ENCODE measurements at regions of chr20 and their contacts with region 1.

Region 1: GRCh38 chr20:45842169-45842812 is 8.7 kb downstream of the SNX21 start:
- DNase-seq: no peak
- ATAC-seq: peak; percentile 19 to 60 (median 42)
- H3K4me3 ChIP-seq: no peak overlapping the region
- H3K27ac ChIP-seq: peak overlapping the region; percentile 67
- H3K4me1 ChIP-seq: peaks cover 36% of the 10 kb centered on the region
- H3K27me3 ChIP-seq: no peaks in the 10 kb centered on the region
- CTCF ChIP-seq: no peak

Region 2: DNA sequence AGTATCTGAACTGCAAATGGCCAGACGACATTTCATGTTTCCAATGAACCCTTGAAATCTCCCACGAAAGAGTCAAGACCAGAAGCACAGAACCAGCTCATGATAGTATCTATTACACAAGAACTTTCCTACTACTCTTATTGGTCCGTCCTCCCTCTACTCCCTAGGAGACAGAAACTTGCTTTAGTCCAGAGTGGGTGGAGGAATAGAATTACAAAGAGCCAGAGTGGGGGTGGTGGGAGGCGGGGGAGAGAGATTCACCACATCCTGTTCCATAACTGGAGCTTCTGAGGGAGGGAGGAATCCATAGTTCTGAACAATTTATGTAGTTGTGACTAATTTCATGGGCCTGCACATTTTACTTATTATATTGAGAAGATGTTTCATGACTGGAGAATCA is 231.2 kb before region 1 on chr20:
- intact Hi-C with region 1: no loop called
- DNase-seq: no peak
- ATAC-seq: no peak
- H3K4me3 ChIP-seq: no peak overlapping the region
- H3K27ac ChIP-seq: no peak overlapping the region
- H3K4me1 ChIP-seq: no peaks in the 10 kb centered on the region
- H3K27me3 ChIP-seq: peaks cover 0 to 2% (median 0%) of the 10 kb centered on the region in 3 donors
- CTCF ChIP-seq: no peak

Region 3: DNA sequence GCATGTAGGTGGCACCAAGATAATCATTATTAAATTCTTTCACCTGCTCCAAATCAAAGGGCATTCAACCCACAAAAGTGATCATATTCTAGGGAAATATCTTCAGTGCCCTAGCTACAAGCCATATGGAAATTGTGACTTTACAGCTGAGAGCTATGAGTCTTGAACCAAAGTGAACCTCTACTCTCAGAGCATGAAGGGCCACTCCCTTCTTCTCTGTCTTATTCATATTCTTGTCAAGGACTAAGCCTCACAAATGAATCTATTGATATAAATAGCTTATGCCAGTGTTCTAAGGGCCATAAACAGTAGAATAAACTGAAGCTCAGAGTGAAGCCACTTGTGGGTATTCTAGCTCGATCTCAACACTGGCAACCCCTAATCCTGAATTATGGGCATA is 90.6 kb before region 1 on chr20:
- intact Hi-C with region 1: no loop called
- DNase-seq: no peak
- ATAC-seq: no peak
- H3K4me3 ChIP-seq: no peak overlapping the region
- H3K27ac ChIP-seq: no peak overlapping the region
- H3K4me1 ChIP-seq: no peaks in the 10 kb centered on the region
- H3K27me3 ChIP-seq: peaks cover 0 to 4% (median 0%) of the 10 kb centered on the region in 3 donors
- CTCF ChIP-seq: no peak

Region 4: DNA sequence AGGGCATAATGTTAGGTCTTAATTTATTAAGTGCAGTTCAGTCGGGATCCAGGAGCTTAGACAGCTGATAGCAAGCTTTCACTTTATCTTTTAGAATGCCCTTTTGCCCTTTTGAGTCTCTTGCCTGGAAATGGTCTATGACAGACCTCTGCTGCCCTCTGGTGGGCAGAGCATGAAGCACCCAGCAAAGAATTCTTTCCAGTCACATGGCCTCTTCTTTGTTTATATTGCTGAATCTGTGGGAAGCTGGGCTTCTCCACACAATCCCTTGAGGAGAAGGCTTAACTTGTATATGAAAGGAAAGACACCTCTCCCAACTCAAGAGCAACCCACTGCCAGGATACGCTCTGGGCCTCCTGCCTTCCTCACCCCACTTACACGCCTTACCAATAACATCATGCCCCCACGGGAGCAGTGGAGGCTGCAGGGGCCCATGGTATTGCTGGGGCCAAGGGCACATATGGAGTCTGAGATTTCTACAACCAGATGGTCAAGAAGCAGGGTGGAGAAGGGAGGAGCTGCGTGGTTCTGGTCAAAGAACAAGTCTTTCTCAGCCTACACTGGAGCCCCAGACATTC is 71.0 kb before region 1 on chr20:
- intact Hi-C with region 1: no loop called
- DNase-seq: peak; percentile 76 to 86
- ATAC-seq: peak; percentile 79 to 94 (median 83)
- H3K4me3 ChIP-seq: no peak overlapping the region
- H3K27ac ChIP-seq: no peak overlapping the region
- H3K4me1 ChIP-seq: no peaks in the 10 kb centered on the region
- H3K27me3 ChIP-seq: no peaks in the 10 kb centered on the region
- CTCF ChIP-seq: peak; percentile 97

Region 5: GRCh38 chr20:45880988-45881788 is 38.9 kb after region 1 on chr20 and contains the start of gene ZSWIM1:
- intact Hi-C with region 1: loop called in 1 of 2 experiments (anchors 5 kb)
- DNase-seq: peak; percentile 99
- ATAC-seq: peak; percentile 97 to 99 (median 98)
- H3K4me3 ChIP-seq: peak within 1 kb of the TSS; percentile 64
- H3K27ac ChIP-seq: peak within 1 kb of the TSS; percentile 72
- H3K4me1 ChIP-seq: peaks cover 18% of the 10 kb centered on the region
- H3K27me3 ChIP-seq: no peaks in the 10 kb centered on the region
- CTCF ChIP-seq: no peak
- total RNA-seq, gene ZSWIM1: 6.1 to 10.0 (median 7.7) TPM

Region 6: DNA sequence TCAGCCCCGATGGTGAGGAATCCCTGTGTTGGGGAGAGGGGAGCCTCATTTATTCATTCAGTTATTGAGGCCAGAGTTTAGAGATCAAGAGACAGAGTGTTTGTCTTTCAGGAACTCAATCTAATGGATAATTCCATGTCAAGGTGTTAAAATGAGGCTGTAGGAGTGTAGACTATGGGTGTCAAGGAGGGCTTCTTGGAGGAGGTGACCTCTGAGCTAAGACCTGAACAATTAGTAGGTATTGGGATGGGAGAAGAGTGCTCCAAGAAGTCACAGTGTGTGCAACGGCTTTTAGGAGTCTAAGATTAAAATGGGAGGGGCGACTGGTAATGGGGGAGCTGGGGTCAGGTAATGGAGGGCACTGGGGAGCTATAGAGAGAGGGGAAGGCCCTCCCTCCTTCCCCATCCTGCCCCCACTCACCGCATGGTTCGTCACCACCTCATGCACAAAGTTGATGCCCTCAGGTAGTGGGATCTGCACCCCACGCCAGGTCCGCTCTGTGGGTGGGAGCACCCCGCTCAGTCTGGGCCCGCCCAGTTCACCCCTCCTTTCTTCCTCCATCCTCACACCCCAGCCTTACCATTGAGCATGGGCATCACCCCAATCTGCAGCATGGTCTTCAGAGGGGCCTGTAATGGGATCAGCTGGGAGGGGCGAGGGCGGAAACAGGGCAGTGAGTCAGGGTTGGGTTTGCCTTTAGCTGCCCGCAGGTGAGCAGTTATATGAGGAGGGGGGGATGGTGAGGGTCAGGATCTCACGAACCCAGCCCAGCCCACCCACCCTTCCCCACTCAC is 56.9 kb after region 1 on chr20:
- intact Hi-C with region 1: no loop called
- DNase-seq: no peak
- ATAC-seq: no peak
- H3K4me3 ChIP-seq: no peak overlapping the region
- H3K27ac ChIP-seq: no peak overlapping the region
- H3K4me1 ChIP-seq: no peaks in the 10 kb centered on the region
- H3K27me3 ChIP-seq: no peaks in the 10 kb centered on the region
- CTCF ChIP-seq: no peak

Measured in psoas muscle (tissue), 8 donors.